Naive thymus-derived CD4-positive, alpha-beta T cell (primary cell): ENCODE measurements at regions of chr15 and their contacts with region 1.

Region 1: GRCh38 chr15:92968926-92969651 is 69.0 kb downstream of the CHD2 start:
- DNase-seq: no peak
- ATAC-seq: peak; percentile 27
- H3K4me3 ChIP-seq: no peak overlapping the region
- H3K4me3 Mint-ChIP-seq: no peak overlapping the region
- H3K27ac ChIP-seq: no peak overlapping the region
- H3K27ac Mint-ChIP-seq: peak overlapping the region in 8 of 9 donors; percentile 22 to 75 (median 42)
- H3K4me1 ChIP-seq: no peaks in the 10 kb centered on the region
- H3K4me1 Mint-ChIP-seq: peaks cover 21 to 64% (median 46%) of the 10 kb centered on the region in 7 donors
- H3K27me3 ChIP-seq: no peaks in the 10 kb centered on the region
- H3K27me3 Mint-ChIP-seq: no peaks in the 10 kb centered on the region

Region 2: GRCh38 chr15:92797168-92797951 is 171.7 kb before region 1 on chr15:
- CTCF ChIA-PET with region 1: no interaction called
- POLR2A ChIA-PET with region 1: no interaction called
- intact Hi-C with region 1: loop called in 1 of 2 experiments (anchors 1 kb)
- DNase-seq: peak in 7 of 9 donors; percentile 61 to 81 (median 74)
- ATAC-seq: peak; percentile 95
- H3K4me3 ChIP-seq: no peak overlapping the region
- H3K4me3 Mint-ChIP-seq: peak overlapping the region in 1 of 10 donors; percentile 12
- H3K27ac ChIP-seq: no peak overlapping the region
- H3K27ac Mint-ChIP-seq: peak overlapping the region; percentile 72 to 95 (median 79)
- H3K4me1 ChIP-seq: peaks cover 3 to 4% of the 10 kb centered on the region in 2 donors
- H3K4me1 Mint-ChIP-seq: peaks cover 6 to 23% (median 12%) of the 10 kb centered on the region in 7 donors
- H3K27me3 ChIP-seq: no peaks in the 10 kb centered on the region
- H3K27me3 Mint-ChIP-seq: no peaks in the 10 kb centered on the region

Region 3: DNA sequence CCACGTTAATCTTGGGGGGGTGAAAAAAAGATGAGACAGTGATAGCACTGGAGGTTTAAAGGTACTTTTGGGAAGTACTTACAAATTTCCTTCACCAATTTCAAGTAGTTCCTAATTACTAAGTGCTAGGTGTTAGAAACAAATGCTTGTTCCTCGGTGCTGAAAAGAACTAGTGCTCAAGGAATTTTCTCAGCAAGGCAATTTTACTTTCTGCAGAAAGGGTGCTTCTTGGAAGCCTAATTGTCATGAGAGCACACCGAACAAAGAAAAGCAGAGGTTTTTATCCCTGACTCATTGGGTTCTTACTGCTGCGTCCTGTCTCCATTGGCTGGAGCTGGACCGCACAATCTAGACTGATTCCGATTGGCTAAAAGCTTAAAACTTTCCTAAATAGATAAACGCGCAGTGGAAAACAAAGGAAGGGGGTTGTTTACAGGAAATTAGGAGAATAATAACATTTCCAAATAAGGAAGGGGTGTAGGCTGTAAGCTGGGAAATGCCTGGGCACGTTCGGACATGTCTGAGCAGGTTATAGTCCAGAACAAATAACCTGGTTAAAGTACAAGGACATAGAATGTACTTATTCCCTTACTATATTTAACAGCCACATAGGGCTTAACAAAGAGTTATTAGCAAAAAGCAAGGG is 19.4 kb before region 1 on chr15:
- CTCF ChIA-PET with region 1: no interaction called
- POLR2A ChIA-PET with region 1: interaction called, 3 read pairs
- intact Hi-C with region 1: loop called in 1 of 2 experiments (anchors 2 kb)
- DNase-seq: peak in 3 of 9 donors; percentile 6 to 19 (median 14)
- ATAC-seq: no peak
- H3K4me3 ChIP-seq: no peak overlapping the region
- H3K4me3 Mint-ChIP-seq: peak overlapping the region in 1 of 10 donors; percentile 21
- H3K27ac ChIP-seq: no peak overlapping the region
- H3K27ac Mint-ChIP-seq: peak overlapping the region in 3 of 9 donors; percentile 56 to 77 (median 66)
- H3K4me1 ChIP-seq: no peaks in the 10 kb centered on the region
- H3K4me1 Mint-ChIP-seq: peaks cover 0 to 15% (median 8%) of the 10 kb centered on the region in 7 donors
- H3K27me3 ChIP-seq: no peaks in the 10 kb centered on the region
- H3K27me3 Mint-ChIP-seq: no peaks in the 10 kb centered on the region

Region 4: GRCh38 chr15:92979011-92979701 is 10.1 kb after region 1 on chr15:
- CTCF ChIA-PET with region 1: no interaction called
- POLR2A ChIA-PET with region 1: no interaction called
- intact Hi-C with region 1: loop called in 1 of 2 experiments (anchors 2 kb)
- DNase-seq: no peak
- ATAC-seq: no peak
- H3K4me3 ChIP-seq: no peak overlapping the region
- H3K4me3 Mint-ChIP-seq: peak overlapping the region in 1 of 10 donors; percentile 51
- H3K27ac ChIP-seq: no peak overlapping the region
- H3K27ac Mint-ChIP-seq: peak overlapping the region in 7 of 9 donors; percentile 38 to 58 (median 54)
- H3K4me1 ChIP-seq: no peaks in the 10 kb centered on the region
- H3K4me1 Mint-ChIP-seq: peaks cover 11 to 35% (median 14%) of the 10 kb centered on the region in 7 donors
- H3K27me3 ChIP-seq: no peaks in the 10 kb centered on the region
- H3K27me3 Mint-ChIP-seq: no peaks in the 10 kb centered on the region

Region 5: DNA sequence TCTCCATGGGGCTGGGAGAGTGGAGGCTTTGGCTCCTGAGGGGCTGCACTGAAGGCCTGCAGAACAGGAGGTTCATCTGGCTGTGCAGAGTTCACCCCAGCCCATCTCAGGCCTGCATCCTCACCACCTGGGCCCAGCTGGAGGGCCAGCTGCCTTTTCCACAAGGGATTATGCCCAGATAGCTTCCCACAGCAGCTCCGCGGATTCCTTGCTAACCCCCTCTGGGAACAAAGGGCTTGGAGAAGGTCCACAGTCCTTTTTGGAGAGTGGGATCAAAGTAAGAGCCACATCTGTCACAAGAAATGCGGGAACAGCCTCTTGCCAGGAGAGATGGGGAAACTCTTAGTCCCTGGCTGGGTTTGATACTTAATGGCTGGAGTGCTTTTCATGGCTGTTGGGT is 284.6 kb after region 1 on chr15:
- CTCF ChIA-PET with region 1: no interaction called
- POLR2A ChIA-PET with region 1: no interaction called
- intact Hi-C with region 1: no loop called
- DNase-seq: no peak
- ATAC-seq: no peak
- H3K4me3 ChIP-seq: no peak overlapping the region
- H3K4me3 Mint-ChIP-seq: no peak overlapping the region
- H3K27ac ChIP-seq: no peak overlapping the region
- H3K27ac Mint-ChIP-seq: no peak overlapping the region
- H3K4me1 ChIP-seq: no peaks in the 10 kb centered on the region
- H3K4me1 Mint-ChIP-seq: peaks cover 0 to 4% (median 0%) of the 10 kb centered on the region in 7 donors
- H3K27me3 ChIP-seq: no peaks in the 10 kb centered on the region
- H3K27me3 Mint-ChIP-seq: peaks cover 0 to 14% (median 3%) of the 10 kb centered on the region in 5 donors

Region 6: DNA sequence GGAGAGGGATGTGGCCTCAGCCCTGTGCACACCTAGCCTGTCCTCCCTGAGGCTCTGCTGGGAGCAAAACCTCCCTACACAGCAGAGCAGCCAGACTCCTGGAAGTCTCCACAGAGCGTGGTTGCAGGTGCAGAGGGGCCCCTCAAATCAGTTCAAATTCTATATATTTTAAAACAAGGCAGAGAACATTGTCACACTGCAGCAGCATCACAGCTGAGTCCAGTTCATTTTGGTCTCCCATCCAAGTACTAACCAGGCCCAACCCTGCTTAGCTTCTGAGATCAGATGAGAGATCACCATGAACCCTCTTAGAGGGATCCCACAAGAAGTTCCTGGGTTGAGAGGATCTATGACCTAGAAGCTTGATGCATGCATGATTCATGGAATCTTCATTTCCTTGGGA is 451.0 kb after region 1 on chr15:
- CTCF ChIA-PET with region 1: no interaction called
- POLR2A ChIA-PET with region 1: no interaction called
- intact Hi-C with region 1: no loop called
- DNase-seq: no peak
- ATAC-seq: no peak
- H3K4me3 ChIP-seq: no peak overlapping the region
- H3K4me3 Mint-ChIP-seq: no peak overlapping the region
- H3K27ac ChIP-seq: no peak overlapping the region
- H3K27ac Mint-ChIP-seq: peak overlapping the region in 1 of 9 donors; percentile 3
- H3K4me1 ChIP-seq: no peaks in the 10 kb centered on the region
- H3K4me1 Mint-ChIP-seq: no peaks in the 10 kb centered on the region
- H3K27me3 ChIP-seq: no peaks in the 10 kb centered on the region
- H3K27me3 Mint-ChIP-seq: peaks cover 0 to 13% (median 8%) of the 10 kb centered on the region in 5 donors